CD8-positive, alpha-beta T cell (primary cell): ENCODE measurements at regions of chr6 and their contacts with region 1.

Region 1: DNA sequence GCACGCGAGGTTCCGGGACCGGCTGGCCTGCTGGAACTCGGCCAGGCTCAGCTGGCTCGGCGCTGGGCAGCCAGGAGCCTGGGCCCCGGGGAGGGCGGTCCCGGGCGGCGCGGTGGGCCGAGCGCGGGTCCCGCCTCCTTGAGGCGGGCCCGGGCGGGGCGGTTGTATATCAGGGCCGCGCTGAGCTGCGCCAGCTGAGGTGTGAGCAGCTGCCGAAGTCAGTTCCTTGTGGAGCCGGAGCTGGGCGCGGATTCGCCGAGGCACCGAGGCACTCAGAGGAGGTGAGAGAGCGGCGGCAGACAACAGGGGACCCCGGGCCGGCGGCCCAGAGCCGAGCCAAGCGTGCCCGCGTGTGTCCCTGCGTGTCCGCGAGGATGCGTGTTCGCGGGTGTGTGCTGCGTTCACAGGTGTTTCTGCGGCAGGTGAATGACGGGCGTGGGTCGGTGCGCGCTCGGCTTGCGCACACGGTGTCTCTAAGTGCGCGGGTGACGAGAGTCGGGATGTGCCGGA is at the start of gene CDKN1A:
- DNase-seq: peak; percentile 28 to 87 (median 73)
- ATAC-seq: peak; percentile 45
- H3K4me3 ChIP-seq: peak within 1 kb of the TSS; percentile 77 to 78
- H3K4me3 Mint-ChIP-seq: peak within 1 kb of the TSS; percentile 92
- H3K27ac ChIP-seq: no peak within 1 kb of the TSS
- H3K27ac Mint-ChIP-seq: peak within 1 kb of the TSS; percentile 87
- H3K4me1 ChIP-seq: peaks cover 25% of the 10 kb centered on the region
- H3K4me1 Mint-ChIP-seq: peaks cover 25% of the 10 kb centered on the region
- H3K27me3 ChIP-seq: peaks cover 0 to 10% of the 10 kb centered on the region in 2 experiments
- H3K27me3 Mint-ChIP-seq: peaks cover 3% of the 10 kb centered on the region
- CTCF ChIP-seq: no peak
- total RNA-seq, gene CDKN1A: 71.3 to 78.7 TPM

Region 2: DNA sequence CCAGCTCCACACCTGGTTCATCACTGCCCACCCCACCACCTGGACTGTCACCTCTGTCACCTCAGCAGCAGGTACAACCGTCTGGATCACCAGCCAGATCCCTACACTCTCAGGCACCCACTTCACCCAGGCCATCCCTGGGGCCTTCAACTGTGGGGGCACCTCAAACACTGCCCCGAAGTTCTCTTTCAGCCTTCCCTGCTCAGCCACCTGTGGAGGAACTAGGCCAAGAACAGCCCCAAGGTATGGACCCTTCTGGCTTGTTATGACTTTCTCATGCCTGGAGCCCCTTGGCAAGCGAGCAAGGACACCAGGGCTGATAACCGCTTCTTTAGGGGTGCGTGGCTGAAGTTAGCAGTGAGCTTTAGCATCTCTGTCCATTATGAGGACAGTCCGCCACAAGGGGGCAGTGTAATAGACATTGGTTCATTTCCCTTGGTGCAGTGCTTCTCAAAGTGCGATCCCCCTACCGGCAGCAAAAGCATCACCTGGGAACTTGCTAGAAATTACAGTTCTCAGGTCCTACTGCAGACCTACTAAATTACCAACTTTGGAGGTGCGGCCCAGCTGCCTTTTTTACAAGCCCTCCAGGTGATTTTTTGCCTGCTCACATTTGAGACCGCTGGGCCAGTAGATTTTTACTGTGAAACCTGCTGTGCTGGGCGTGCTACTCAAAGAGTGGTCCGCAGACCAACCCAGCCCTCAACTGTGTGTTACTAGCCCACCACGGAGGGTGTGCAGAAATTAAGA is 376.2 kb before region 1 on chr6:
- CTCF ChIA-PET with region 1: interaction called, 4 read pairs
- POLR2A ChIA-PET with region 1: no interaction called
- intact Hi-C with region 1: loop called in 1 of 2 experiments (anchors 1 kb)
- DNase-seq: peak; percentile 84 to 97 (median 93)
- ATAC-seq: peak; percentile 99
- H3K4me3 ChIP-seq: no peak overlapping the region
- H3K4me3 Mint-ChIP-seq: no peak overlapping the region
- H3K27ac ChIP-seq: no peak overlapping the region
- H3K27ac Mint-ChIP-seq: no peak overlapping the region
- H3K4me1 ChIP-seq: no peaks in the 10 kb centered on the region
- H3K4me1 Mint-ChIP-seq: peaks cover 6% of the 10 kb centered on the region
- H3K27me3 ChIP-seq: peaks cover 0 to 2% of the 10 kb centered on the region in 2 experiments
- H3K27me3 Mint-ChIP-seq: peaks cover 14% of the 10 kb centered on the region
- CTCF ChIP-seq: peak; percentile 99

Region 3: DNA sequence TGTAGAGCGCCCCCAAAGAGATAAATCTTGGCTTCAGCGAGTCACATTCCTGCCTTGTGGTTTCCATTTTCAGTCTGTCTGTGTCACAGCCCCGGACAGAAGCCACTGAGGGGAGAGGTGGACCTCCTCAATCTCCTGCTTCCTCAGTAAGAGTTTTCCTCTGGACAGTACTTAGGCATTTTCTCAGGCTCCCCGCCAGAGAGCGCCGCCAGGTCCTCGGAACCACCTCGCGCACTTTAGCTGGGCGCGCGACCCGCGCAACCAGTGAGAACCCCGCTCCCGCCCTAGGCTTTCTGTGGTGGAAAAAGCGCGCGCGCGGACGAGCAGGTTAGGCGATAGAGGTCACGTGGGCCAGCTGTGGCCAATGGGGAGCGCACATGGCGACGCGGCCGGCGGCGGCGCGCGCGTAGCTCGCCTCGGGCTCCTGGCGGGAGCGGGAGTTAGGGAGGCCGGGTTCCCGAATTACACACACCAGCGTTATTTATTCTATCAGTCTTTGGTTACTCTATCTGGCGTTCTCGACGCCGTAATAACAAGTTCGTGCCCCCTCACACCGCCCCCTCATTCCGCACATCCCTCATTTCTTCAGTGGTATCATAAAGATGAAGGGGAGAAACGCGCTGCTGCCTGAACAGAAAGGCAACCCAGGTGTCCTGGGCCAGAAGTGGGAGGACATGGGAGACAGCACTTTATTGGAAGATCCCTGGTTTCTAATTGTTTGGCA is 255.3 kb before region 1 on chr6:
- CTCF ChIA-PET with region 1: interaction called, 7 read pairs
- POLR2A ChIA-PET with region 1: interaction called, 6 read pairs
- intact Hi-C with region 1: loop called (anchors 1 kb)
- DNase-seq: peak; percentile 96 to 99 (median 98)
- ATAC-seq: peak; percentile 96
- H3K4me3 ChIP-seq: peak overlapping the region; percentile 63 to 74
- H3K4me3 Mint-ChIP-seq: peak overlapping the region; percentile 95
- H3K27ac ChIP-seq: peak overlapping the region; percentile 60 to 80
- H3K27ac Mint-ChIP-seq: peak overlapping the region; percentile 95
- H3K4me1 ChIP-seq: peaks cover 12% of the 10 kb centered on the region
- H3K4me1 Mint-ChIP-seq: peaks cover 11% of the 10 kb centered on the region
- H3K27me3 ChIP-seq: no peaks in the 10 kb centered on the region
- H3K27me3 Mint-ChIP-seq: no peaks in the 10 kb centered on the region
- CTCF ChIP-seq: peak; percentile 74

Region 4: DNA sequence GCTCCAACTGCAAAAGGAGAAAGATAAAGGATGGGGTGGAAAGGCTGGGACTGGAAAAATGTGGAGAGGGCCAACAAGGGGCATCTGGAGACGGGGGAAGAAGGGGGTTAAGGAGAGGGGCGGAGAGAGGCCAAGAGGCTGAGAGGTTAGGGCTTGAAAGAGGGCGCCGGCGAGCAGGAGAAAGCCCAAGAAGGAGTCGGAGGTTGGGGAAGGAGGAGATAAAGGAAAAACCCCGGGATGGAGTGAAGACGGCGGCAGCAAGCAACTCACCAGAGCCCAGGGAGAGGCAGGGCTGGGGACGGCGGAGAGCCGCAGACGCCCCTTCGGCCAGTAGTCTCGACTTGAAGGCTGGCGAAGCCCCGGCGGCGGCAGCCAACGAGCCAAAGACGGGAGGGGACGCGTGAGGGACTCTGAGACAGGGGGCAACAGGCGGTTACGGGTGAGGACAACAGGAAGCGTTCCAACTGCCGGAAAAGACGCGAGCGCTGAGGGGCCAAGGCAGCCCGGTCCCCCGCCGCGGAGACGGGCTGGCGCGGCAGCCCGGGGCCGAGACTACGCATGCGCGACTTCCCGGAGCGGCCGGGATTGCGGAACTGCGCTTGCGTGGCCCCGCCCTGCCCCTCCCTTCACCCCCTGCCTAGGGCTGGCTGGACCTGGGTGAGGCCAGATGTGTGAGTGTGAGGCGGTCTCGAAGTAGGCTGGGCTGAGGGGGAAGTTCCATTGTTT is 131.5 kb before region 1 on chr6 and contains the start of gene STK38:
- CTCF ChIA-PET with region 1: no interaction called
- POLR2A ChIA-PET with region 1: interaction called, 3 read pairs
- intact Hi-C with region 1: loop called (anchors 2 to 5 kb)
- DNase-seq: peak; percentile 85 to 98 (median 94)
- ATAC-seq: peak; percentile 72
- H3K4me3 ChIP-seq: peak within 1 kb of the TSS; percentile 82 to 85
- H3K4me3 Mint-ChIP-seq: peak within 1 kb of the TSS; percentile 99
- H3K27ac ChIP-seq: peak within 1 kb of the TSS; percentile 92 to 94
- H3K27ac Mint-ChIP-seq: peak within 1 kb of the TSS; percentile 99
- H3K4me1 ChIP-seq: peaks cover 32% of the 10 kb centered on the region
- H3K4me1 Mint-ChIP-seq: peaks cover 52% of the 10 kb centered on the region
- H3K27me3 ChIP-seq: no peaks in the 10 kb centered on the region
- H3K27me3 Mint-ChIP-seq: no peaks in the 10 kb centered on the region
- CTCF ChIP-seq: no peak
- total RNA-seq, gene STK38: 37.6 to 38.7 TPM

Region 5: GRCh38 chr6:36615018-36615761 is 63.4 kb before region 1 on chr6:
- CTCF ChIA-PET with region 1: interaction called, 30 read pairs
- POLR2A ChIA-PET with region 1: interaction called, 4 read pairs
- intact Hi-C with region 1: loop called (anchors 1 kb)
- DNase-seq: peak in 5 of 9 experiments; percentile 31 to 80 (median 54)
- ATAC-seq: peak; percentile 84
- H3K4me3 ChIP-seq: no peak overlapping the region
- H3K4me3 Mint-ChIP-seq: no peak overlapping the region
- H3K27ac ChIP-seq: no peak overlapping the region
- H3K27ac Mint-ChIP-seq: peak overlapping the region; percentile 79
- H3K4me1 ChIP-seq: no peaks in the 10 kb centered on the region
- H3K4me1 Mint-ChIP-seq: peaks cover 15% of the 10 kb centered on the region
- H3K27me3 ChIP-seq: no peaks in the 10 kb centered on the region
- H3K27me3 Mint-ChIP-seq: no peaks in the 10 kb centered on the region
- CTCF ChIP-seq: peak; percentile 60

Region 6: DNA sequence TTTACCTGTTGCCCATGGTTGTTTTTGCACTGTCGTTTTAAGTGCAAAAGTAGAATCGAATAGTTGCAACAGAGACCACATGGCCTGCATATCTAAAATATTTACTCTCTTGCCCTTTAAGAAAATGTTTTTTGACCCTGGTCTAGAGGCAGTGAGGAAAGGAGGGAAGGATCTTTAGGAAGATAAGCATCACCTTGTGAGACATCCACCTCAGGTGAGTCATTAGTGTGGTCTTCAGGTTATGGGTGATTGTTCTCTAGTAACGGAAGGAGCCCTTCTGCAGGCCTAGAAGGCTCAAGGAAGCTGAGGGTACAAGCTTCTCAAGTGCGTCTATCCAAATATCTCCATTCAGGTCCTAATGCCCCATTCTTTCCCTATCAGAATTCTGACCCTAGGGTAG is 12.4 kb after region 1 on chr6:
- CTCF ChIA-PET with region 1: interaction called, 11 read pairs
- POLR2A ChIA-PET with region 1: no interaction called
- intact Hi-C with region 1: no loop called
- DNase-seq: no peak
- ATAC-seq: no peak
- H3K4me3 ChIP-seq: no peak overlapping the region
- H3K4me3 Mint-ChIP-seq: no peak overlapping the region
- H3K27ac ChIP-seq: no peak overlapping the region
- H3K27ac Mint-ChIP-seq: no peak overlapping the region
- H3K4me1 ChIP-seq: peaks cover 8% of the 10 kb centered on the region
- H3K4me1 Mint-ChIP-seq: peaks cover 7% of the 10 kb centered on the region
- H3K27me3 ChIP-seq: no peaks in the 10 kb centered on the region
- H3K27me3 Mint-ChIP-seq: no peaks in the 10 kb centered on the region
- CTCF ChIP-seq: no peak